ENCODE measurements at regions of chr3 and their contacts with region 1.

Region 1: DNA sequence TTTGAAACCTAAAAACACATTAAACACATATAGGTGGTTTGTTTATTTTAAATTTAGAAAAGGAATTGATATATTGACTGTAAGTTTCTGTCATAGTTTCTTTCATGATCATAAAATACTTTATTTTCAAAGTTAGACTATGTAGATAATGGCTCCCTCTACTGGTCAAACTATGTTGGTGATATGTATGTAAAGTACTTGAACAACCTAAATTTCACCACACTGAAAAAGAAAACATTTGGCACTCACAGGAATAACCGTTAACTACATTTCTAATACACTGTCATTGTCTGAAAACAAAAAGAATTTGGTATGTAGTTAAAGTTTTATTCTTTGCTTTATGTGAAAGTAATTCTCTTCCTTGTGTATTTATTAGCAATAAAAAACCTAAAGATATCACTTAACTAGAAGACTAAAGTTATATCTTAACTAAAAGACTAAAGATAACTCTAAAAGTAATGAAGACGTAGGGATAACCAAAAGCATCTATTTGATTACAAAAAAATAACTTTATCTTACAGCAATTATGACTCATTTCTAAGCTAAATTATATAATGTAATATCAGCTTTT is 427.5 kb downstream of the VGLL3 start:
- DNase-seq: no peak
- H3K4me3 ChIP-seq: no peak overlapping the region
- H3K27ac ChIP-seq: no peak overlapping the region
- H3K4me1 ChIP-seq: no peaks in the 10 kb centered on the region
- H3K27me3 ChIP-seq: no peaks in the 10 kb centered on the region
- CTCF ChIP-seq: peak; percentile 81

Region 2: DNA sequence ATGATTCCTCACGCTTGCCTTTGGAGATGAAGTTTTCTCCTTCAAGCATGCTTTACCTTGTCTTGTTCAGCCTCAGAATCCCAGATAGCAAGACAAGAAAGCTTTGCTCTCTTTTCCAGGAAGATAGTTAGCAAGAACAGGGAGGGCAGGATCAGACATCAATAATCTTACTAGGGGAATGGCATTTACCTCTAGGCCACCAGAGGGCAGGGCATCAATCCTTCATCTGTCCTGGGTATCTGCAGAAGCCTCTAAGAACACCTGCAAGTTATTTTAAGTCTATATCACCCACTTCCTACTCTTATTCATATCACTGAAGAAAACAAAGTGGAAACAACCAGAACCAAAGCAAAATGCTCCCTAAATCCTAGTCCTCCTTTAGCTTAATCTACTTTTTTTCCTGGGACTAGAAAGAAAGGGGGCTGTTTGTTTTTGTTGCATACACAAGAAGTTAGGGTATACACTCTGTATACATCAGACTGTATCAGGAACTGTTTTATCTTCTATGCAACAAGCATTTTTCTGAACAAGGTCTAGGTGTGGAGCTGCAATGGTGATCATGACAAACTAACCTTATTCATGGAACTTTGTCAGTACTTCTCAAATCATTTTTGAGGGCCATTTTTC is 742.2 kb before region 1 on chr3:
- CTCF ChIA-PET with region 1: no interaction called
- POLR2A ChIA-PET with region 1: no interaction called
- intact Hi-C with region 1: loop called (anchors 2 kb)
- DNase-seq: peak in 1 of 2 experiments; percentile 32
- H3K4me3 ChIP-seq: no peak overlapping the region
- H3K27ac ChIP-seq: no peak overlapping the region
- H3K4me1 ChIP-seq: no peaks in the 10 kb centered on the region
- H3K27me3 ChIP-seq: no peaks in the 10 kb centered on the region
- CTCF ChIP-seq: peak; percentile 73

Region 3: GRCh38 chr3:86180696-86181095 is 382.8 kb before region 1 on chr3:
- CTCF ChIA-PET with region 1: no interaction called
- POLR2A ChIA-PET with region 1: no interaction called
- intact Hi-C with region 1: loop called (anchors 2 kb)
- DNase-seq: peak in 1 of 2 experiments; percentile 1
- H3K4me3 ChIP-seq: no peak overlapping the region
- H3K27ac ChIP-seq: no peak overlapping the region
- H3K4me1 ChIP-seq: no peaks in the 10 kb centered on the region
- H3K27me3 ChIP-seq: no peaks in the 10 kb centered on the region
- CTCF ChIP-seq: peak; percentile 49; the same call in 1 of the 2 replicates

Region 4: DNA sequence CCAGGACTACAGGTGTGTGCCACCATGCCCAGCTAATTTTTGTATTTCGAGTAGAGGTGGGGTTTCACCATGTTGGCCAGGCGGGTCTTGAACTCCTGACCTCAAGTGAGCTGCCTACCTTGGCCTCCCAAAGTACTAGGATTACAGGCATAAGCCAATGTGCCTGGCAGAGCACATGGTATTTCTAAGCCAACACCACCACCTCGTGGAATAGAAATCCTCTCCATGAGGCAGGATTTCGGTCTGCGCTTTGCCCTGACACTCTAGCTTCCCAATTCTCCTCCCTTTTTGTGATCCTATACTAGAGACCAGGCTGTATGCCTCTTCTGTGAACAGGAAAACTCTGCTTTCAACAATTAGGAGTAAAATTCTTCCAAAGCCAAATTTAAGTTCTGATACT is 55.2 kb after region 1 on chr3:
- CTCF ChIA-PET with region 1: no interaction called
- POLR2A ChIA-PET with region 1: no interaction called
- intact Hi-C with region 1: no loop called
- DNase-seq: no peak
- H3K4me3 ChIP-seq: no peak overlapping the region
- H3K27ac ChIP-seq: no peak overlapping the region
- H3K4me1 ChIP-seq: no peaks in the 10 kb centered on the region
- H3K27me3 ChIP-seq: no peaks in the 10 kb centered on the region
- CTCF ChIP-seq: no peak

Measured in PC-9 (cell line).